ENCODE measurements at regions of chr9 and their contacts with region 1.

Region 1: DNA sequence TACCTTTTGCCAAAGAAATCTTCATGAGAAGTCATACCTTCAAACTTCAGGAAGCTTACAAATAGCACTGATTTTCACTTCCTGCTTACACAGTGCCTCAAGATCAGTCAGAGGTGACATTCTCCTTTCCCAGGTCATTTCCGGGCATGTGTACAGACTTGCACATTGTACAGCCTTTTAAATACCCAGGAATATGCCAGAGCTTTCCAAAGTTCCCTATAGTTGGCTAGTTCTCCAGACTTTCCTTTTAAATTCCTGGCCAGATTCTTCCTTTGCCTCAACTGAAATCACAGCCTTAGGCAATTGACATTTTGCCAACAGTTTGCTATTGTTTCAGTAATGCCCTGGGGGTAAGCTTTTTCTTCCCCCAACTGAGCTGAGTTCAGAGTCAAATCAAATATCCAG is 47.2 kb downstream of the RFX3 start:
- DNase-seq: no peak
- ATAC-seq: no peak
- H3K4me3 Mint-ChIP-seq: no peak overlapping the region
- H3K27ac Mint-ChIP-seq: peak overlapping the region; percentile 66
- H3K4me1 Mint-ChIP-seq: peaks cover 66% of the 10 kb centered on the region
- H3K27me3 Mint-ChIP-seq: no peaks in the 10 kb centered on the region

Region 2: DNA sequence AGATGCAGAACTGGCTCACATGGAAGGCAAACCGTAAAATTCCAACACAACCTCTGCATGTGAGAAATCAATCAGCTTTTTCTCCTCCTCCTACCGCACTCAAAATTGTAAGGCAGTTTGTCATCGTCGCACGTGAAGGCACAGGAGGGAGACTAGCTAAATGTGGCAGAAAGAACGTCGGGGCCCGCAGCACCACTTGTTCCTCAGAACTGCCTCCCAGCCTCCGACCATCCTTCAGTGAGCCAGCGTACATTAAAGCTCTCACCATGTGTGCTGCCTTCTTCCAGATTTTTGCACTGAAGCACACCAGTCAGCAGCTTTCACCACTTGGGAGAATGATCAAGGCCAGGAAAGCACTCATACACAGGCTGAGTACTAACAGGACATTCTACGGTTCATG is 58.7 kb before region 1 on chr9:
- CTCF ChIA-PET with region 1: no interaction called
- POLR2A ChIA-PET with region 1: no interaction called
- DNase-seq: no peak
- ATAC-seq: no peak
- H3K4me3 Mint-ChIP-seq: no peak overlapping the region
- H3K27ac Mint-ChIP-seq: no peak overlapping the region
- H3K4me1 Mint-ChIP-seq: no peaks in the 10 kb centered on the region
- H3K27me3 Mint-ChIP-seq: no peaks in the 10 kb centered on the region

Region 3: GRCh38 chr9:3467593-3468219 is 10.8 kb before region 1 on chr9:
- CTCF ChIA-PET with region 1: interaction called, 21 read pairs
- POLR2A ChIA-PET with region 1: no interaction called
- DNase-seq: peak; percentile 72
- ATAC-seq: peak; percentile 99
- H3K4me3 Mint-ChIP-seq: no peak overlapping the region
- H3K27ac Mint-ChIP-seq: no peak overlapping the region
- H3K4me1 Mint-ChIP-seq: peaks cover 4% of the 10 kb centered on the region
- H3K27me3 Mint-ChIP-seq: no peaks in the 10 kb centered on the region

Measured in activated CD8-positive, alpha-beta T cell treated with anti-CD3 and anti-CD28 coated beads, Interleukin-2, amount 10 ng/mL, durations not matched to agents 7 days and 5 days (primary cell).